ENCODE measurements at regions of chr15 and their contacts with region 1.

Region 1: GRCh38 chr15:100484443-100484842 is 44.3 kb downstream of the CERS3 start:
- DNase-seq: no peak
- ATAC-seq: no peak

Region 2: GRCh38 chr15:100301910-100302431 is 182.5 kb before region 1 on chr15:
- intact Hi-C with region 1: loop called (anchors 5 kb)
- DNase-seq: no peak
- ATAC-seq: no peak